ENCODE measurements at regions of chr1 and their contacts with region 1.

Region 1: DNA sequence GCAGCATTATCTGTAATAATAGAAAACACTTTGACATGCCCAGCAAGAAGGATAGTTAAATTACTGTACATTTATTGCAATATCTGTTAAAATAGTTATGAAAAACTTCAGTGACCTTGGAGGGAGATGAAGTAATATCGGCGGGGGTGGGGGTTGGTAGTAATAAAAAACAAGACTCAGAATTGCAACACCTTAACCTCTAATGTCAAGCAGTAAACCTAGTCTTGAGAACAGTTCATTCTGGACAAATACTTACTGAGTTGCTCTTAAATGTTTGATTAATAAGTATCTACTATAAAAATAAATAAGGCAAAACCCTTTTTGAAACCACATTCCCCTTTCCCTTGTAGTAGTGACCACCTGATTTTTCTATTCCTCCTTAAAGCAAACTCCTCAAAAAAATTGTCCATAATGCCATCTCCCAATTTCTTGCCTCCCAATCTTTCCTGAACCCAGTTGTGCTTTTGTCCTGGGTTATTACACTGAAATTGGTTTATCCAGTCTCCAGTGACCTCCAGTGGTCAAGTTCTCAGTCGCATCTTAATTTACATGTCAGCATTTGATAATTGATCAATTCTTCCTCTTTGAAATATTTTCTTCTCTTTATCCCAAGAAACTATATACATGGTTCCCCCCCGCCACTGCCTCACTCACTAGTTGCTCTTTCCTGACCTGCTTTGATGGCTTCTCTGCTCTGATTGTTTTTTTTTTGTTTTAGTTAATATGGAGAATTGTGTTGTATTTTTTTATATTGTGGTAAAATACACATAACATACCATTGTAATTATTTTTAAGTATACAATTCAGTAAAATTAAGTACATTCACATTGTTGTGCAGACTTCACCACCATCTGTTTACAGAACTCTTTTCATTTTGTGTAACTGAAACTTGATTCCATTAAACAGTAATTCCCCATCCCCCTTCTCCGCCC is 36.8 kb downstream of the RAP1A start:
- ATAC-seq: peak in 2 of 8 experiments; percentile 25 to 47
- H3K4me3 ChIP-seq: no peak overlapping the region
- H3K27ac ChIP-seq: no peak overlapping the region
- H3K4me1 ChIP-seq: peaks cover 0 to 3% of the 10 kb centered on the region in 2 donors

Region 2: DNA sequence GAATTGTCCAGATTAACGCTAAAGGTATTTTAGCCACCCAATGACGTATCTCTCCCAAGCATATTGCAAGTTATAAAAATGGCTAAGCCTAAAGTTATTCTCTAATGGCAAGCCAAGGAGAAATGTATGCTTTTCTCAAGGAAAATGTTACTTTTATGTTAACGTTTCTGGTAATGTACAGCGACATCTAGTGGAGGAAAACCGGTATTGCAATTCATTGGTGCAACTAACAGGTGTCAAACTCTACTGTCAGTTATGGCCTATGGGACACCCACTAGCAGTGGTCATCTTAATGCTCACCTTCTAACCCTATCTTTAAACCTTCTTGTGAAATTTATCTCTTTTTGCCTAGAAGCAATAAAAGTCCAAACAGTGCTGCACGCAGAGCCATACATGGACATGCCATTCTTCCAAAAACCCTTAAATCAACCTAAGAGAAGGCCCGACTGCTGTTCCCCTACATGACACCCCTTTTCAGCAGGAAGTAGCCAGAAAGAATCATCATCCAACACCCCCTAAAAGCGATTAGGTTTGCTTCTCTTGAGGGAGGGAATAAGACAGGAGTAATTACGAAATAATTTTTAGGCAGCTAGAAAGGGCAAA is 624.0 kb before region 1 on chr1:
- in situ Hi-C with region 1: no loop called
- ATAC-seq: no peak
- H3K4me3 ChIP-seq: no peak overlapping the region
- H3K27ac ChIP-seq: no peak overlapping the region
- H3K4me1 ChIP-seq: no peaks in the 10 kb centered on the region

Region 3: DNA sequence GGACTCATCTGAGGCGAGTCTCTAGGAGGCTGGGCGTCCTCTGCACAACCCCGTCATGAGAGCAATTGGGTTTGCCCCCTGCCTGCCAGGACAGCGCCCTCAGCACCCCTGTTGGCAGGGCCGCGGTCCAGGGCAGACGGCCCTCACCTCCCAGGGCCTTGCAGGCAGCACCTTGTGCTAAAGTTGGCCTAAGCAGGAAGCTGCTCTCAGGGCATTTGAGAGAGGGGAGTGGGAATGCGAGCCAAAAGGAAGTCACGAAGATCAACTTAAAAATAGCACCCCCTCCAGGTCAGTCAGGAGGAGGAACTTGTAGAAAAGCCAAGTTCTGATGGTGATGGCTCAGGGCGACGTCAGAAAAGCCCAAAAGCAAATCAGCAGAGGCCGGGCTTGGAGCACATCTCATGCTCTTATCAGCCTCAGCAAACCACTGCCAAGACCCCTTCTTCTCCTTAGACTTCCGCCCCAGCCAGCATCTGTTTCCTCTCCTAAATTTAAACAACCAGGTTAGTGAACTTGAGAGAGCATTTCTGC is 140.3 kb before region 1 on chr1:
- in situ Hi-C with region 1: loop called in 2 of 9 experiments (anchors 10 to 25 kb)
- ATAC-seq: peak in 3 of 8 experiments; percentile 25 to 69 (median 56)
- H3K4me3 ChIP-seq: no peak overlapping the region
- H3K27ac ChIP-seq: no peak overlapping the region
- H3K4me1 ChIP-seq: peaks cover 0 to 3% of the 10 kb centered on the region in 2 donors

Region 4: DNA sequence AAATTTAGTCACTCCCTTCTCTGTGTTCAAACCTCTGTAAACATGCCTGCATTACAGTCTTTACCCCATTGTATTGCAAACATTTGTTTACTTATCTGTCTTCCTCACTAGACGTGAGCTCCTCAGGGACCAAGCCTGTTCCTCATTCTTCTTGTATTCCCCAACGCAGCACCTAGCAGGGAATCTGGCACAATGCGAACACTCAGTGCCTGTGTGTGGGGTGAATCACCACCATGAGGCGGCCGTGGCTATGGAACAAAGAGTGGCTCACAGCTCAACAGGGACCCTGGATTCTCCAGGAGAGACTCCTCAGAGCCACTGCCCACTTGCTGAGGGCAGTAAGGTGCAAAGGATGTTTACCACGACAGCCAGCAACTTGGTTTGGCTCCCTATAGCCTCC is 195.2 kb after region 1 on chr1:
- in situ Hi-C with region 1: no loop called
- ATAC-seq: peak in 5 of 8 experiments; percentile 65 to 79 (median 75)
- H3K4me3 ChIP-seq: no peak overlapping the region
- H3K27ac ChIP-seq: peak overlapping the region in 1 of 2 donors; percentile 1
- H3K4me1 ChIP-seq: peaks cover 11 to 30% of the 10 kb centered on the region in 2 donors

Region 5: DNA sequence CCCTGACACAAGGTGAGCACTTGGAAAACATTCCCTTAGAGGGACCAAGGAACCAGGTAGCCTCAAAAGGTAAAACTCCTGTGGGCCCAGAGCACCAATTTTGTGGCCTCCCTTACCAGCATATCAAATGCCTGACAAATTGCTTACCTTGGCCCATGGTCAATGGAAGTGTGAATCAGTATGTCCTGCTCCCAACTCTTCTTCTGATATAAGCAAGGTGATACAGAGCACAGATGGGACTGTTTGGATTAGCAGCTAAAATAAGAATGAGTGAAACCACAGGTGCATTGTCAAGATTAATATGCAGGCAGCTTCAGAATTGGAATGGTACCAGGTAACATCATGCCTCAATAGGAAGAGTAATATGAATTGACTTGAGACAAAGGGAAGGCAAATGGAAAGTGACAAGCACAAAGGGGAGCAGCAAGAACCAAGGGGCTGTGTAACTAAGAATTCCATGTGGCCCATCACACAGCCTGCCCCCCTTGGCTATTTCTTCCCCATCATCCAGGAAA is 489.9 kb after region 1 on chr1:
- in situ Hi-C with region 1: no loop called
- ATAC-seq: no peak
- H3K4me3 ChIP-seq: no peak overlapping the region
- H3K27ac ChIP-seq: no peak overlapping the region
- H3K4me1 ChIP-seq: peaks cover 0 to 3% of the 10 kb centered on the region in 2 donors